Aorta (tissue), 5 donors: ENCODE measurements at regions of chr7 and their contacts with region 1.

Region 1: DNA sequence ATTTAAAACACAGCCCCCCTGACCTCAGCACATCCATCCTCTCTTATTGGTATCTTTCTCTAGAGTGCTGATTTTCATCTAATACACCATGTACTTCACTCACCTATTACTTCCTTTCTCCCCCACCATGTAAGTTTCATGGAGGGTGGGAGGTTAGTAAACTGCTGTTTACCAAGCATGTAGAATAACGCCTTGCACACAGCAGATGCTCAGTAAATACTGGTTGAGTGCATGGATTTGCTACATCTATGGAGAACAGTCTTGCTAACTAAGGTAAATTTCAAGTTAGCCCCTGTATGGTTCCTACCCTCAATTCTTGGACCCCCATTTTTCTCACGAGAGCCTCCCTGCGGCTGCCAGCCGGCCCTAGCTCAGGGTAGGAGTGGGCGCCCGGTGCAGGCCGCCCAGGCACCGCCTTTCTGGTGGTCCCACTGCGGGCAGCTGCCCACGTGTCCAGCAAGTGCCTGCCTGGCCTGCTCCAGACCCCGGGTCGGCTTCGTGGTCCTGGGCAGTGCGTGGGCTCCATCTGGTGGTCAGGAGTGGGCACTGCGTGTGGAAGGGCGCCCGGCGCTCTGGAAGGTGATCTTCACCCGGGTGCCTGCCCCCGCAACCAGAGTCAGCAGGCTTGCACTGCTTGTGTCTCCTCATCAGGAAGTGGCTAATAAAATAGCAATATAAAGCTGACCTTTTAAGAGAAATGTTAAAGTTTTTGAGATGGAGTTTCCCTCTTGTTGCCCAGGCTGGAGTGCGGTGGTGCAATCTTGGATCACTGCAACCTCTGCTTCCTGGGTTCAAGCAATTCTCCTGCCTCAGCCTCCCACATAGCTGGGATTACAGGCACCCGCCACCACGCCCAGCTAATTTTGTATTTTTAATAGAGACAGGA is 63.4 kb upstream of the DNAJB6 start:
- DNase-seq: peak; percentile 80 to 92
- ATAC-seq: peak; percentile 88
- H3K4me3 ChIP-seq: no peak overlapping the region
- H3K27ac ChIP-seq: no peak overlapping the region
- H3K4me1 ChIP-seq: peaks cover 0 to 4% of the 10 kb centered on the region in 2 donors
- H3K27me3 ChIP-seq: no peaks in the 10 kb centered on the region

Region 2: DNA sequence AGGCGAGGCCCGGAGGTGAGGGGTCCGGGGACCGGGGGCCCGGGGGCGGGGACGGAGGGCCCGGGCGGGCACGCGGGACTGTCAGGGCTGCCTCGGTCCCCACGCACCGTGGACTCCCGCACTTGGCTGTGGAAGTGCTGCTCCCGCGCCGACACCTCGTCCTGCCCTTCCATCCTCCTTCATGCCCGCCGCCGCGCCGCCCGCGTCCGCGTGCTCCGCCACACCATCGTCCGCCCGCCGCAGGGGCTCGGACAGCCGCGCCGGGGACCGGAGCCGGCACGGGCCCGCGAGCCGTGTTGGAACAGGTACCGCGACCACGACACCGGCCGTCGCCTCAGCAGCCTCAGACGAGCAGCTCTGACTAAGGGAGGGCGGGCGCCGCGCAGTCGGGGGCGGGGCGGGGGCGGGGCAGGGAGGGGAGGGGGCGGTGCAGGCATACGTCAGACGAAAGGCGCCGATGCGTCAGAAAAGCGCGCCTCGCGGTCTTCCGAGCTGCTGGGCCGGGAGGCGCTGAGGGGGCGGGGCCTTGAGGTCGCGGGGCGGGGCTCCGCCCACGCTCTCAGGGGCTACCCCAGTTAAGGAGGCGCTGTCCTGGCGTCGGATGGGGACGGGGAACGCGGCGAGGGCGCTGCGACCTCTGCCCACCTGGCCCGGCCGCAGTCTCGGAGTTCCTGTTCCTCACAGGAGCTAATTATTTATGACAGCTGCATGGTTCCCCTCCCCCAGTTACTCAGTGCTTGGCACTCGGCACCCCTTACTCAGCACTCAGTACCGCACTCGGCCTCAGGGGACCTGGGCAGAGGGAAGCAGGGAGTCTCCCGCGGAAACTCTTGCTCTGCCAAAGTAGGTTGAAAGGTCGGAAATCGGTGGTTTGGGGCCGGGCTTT is 380.4 kb before region 1 on chr7 and contains the start of gene LMBR1:
- intact Hi-C with region 1: loop called in 1 of 2 experiments (anchors 5 kb)
- DNase-seq: peak; percentile 94 to 97
- ATAC-seq: peak; percentile 98
- H3K4me3 ChIP-seq: peak within 1 kb of the TSS; percentile 72 to 96
- H3K27ac ChIP-seq: peak within 1 kb of the TSS in 1 of 2 donors; percentile 73
- H3K4me1 ChIP-seq: no peaks in the 10 kb centered on the region
- H3K27me3 ChIP-seq: no peaks in the 10 kb centered on the region
- total RNA-seq, gene LMBR1: 63.1 to 63.8 TPM

Region 3: GRCh38 chr7:156949541-156950380 is 323.7 kb before region 1 on chr7 and contains the start of gene NOM1:
- intact Hi-C with region 1: loop called in 1 of 2 experiments (anchors 5 kb)
- DNase-seq: peak; percentile 93 to 98
- ATAC-seq: peak; percentile 95
- H3K4me3 ChIP-seq: peak within 1 kb of the TSS; percentile 91 to 93
- H3K27ac ChIP-seq: no peak within 1 kb of the TSS
- H3K4me1 ChIP-seq: peaks cover 2 to 8% of the 10 kb centered on the region in 2 donors
- H3K27me3 ChIP-seq: no peaks in the 10 kb centered on the region
- total RNA-seq, gene NOM1: 19.4 to 23.5 TPM

Region 4: GRCh38 chr7:156969972-156970420 is 303.5 kb before region 1 on chr7:
- intact Hi-C with region 1: loop called in 1 of 2 experiments (anchors 5 kb)
- DNase-seq: no peak
- ATAC-seq: no peak
- H3K4me3 ChIP-seq: no peak overlapping the region
- H3K27ac ChIP-seq: no peak overlapping the region
- H3K4me1 ChIP-seq: no peaks in the 10 kb centered on the region
- H3K27me3 ChIP-seq: no peaks in the 10 kb centered on the region

Region 5: GRCh38 chr7:157138424-157139110 is 134.9 kb before region 1 on chr7 and contains the start of gene UBE3C:
- intact Hi-C with region 1: loop called in 1 of 2 experiments (anchors 2 kb)
- DNase-seq: peak; percentile 95 to 97
- ATAC-seq: peak; percentile 95
- H3K4me3 ChIP-seq: peak within 1 kb of the TSS; percentile 61 to 91
- H3K27ac ChIP-seq: peak within 1 kb of the TSS; percentile 1 to 69
- H3K4me1 ChIP-seq: no peaks in the 10 kb centered on the region
- H3K27me3 ChIP-seq: no peaks in the 10 kb centered on the region
- total RNA-seq, gene UBE3C: 61.0 to 73.0 TPM

Region 6: DNA sequence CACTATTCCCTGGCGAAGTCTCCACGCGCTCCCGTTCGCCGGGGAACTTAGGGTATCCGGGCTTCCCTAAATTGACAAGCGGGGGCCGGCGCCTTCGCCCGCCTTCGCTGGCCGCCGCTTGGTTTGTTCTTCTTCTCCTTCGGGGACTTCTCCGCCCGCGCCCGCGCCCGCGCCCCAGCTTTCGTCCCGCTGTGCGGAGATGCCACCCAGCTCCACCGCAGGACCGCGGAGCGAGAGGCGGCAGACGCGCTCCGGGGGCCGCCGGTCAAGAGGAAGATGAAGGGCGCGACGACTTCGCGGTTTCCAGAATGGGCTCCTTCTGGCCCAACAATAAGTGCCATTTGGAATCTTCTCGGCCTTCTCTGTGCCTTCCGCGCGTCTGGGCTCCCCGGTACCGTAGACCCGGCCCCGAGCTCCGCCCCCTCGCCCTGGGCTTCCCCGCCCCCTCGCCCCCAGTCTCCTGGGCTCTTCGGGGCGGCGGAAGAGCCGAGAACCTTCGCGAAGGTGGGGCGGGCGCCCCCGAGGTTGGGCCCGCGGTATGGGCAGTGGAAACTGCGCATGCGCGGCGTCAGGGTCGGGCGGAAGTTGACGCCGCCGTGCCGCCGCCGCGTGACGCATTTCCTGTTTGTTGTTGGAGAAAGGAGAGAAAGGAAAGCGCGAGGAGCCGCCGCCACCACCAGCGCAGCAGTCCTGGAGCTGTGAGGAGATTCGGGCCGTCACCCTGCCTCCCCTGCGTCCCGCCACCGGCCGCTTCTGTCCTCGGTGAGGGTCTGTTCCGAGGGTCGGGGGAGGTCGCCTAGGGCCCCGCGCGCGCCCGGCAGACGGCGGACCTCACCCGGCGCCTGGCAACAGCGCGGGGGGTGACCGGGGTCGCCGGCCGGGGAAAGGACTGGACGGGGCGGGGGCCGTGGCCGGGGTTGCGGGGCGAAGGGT is 63.2 kb after region 1 on chr7 and contains the start of gene DNAJB6:
- intact Hi-C with region 1: loop called in 1 of 2 experiments (anchors 5 kb)
- DNase-seq: peak; percentile 97 to 98
- ATAC-seq: peak; percentile 95
- H3K4me3 ChIP-seq: peak within 1 kb of the TSS; percentile 87 to 95
- H3K27ac ChIP-seq: peak within 1 kb of the TSS; percentile 83 to 97
- H3K4me1 ChIP-seq: peaks cover 0 to 2% of the 10 kb centered on the region in 2 donors
- H3K27me3 ChIP-seq: no peaks in the 10 kb centered on the region
- total RNA-seq, gene DNAJB6: 130 to 143 TPM

Region 7: DNA sequence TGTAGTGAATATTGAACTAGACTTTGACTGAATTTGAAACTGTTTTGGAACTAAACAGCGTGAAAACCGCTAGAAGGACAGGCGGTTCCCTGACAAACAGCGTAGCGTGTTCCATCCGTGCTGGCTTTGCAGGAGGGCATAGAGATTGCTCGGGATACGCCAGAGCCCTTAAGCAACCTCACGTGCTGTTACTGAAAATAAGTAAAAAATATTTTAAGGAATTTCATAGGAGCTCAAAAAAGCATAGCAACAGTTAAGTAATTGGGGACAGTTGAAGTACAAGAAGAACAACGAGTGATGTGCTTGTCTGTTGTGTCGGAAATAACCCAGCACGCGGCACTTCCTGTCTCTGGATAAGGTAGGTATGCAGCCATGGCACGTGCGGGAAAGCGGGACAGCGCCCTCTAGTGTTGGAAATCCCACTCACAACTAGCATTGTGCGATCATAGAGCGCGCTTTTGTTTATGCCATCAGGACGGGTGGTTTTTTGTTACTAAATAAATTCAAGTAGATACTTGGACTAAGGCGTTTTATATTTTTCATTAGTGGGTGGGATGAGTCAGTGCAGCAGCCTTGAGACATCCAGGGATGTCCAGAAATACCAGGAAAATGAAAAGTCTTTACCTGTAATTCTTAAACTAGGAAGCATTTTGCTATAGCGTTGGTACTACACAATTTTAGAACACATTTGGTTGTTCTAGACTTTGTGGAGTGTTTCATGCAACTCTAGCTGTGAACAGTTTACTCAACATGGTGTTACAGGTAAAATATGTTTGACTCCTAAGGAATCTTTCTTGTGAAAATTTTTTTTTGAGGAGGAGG is 113.7 kb after region 1 on chr7:
- intact Hi-C with region 1: loop called in 1 of 2 experiments (anchors 5 kb)
- DNase-seq: peak; percentile 89 to 93
- ATAC-seq: peak; percentile 89
- H3K4me3 ChIP-seq: no peak overlapping the region
- H3K27ac ChIP-seq: peak overlapping the region in 1 of 2 donors; percentile 71
- H3K4me1 ChIP-seq: no peaks in the 10 kb centered on the region
- H3K27me3 ChIP-seq: no peaks in the 10 kb centered on the region